ENCODE measurements at regions of chr14 and their contacts with region 1.

Region 1: GRCh38 chr14:32252030-32252670 is 49.1 kb upstream of the RNU6-8 start:
- DNase-seq: no peak
- ATAC-seq: peak; percentile 85
- H3K4me3 ChIP-seq: no peak overlapping the region
- H3K27ac ChIP-seq: no peak overlapping the region
- H3K4me1 ChIP-seq: no peaks in the 10 kb centered on the region
- H3K27me3 ChIP-seq: no peaks in the 10 kb centered on the region

Region 2: GRCh38 chr14:31926123-31926522 is 326.0 kb before region 1 on chr14:
- intact Hi-C with region 1: loop called (anchors 2 to 5 kb)
- DNase-seq: no peak
- ATAC-seq: no peak
- H3K4me3 ChIP-seq: no peak overlapping the region
- H3K27ac ChIP-seq: no peak overlapping the region
- H3K4me1 ChIP-seq: peaks cover 0 to 2% of the 10 kb centered on the region in 2 donors
- H3K27me3 ChIP-seq: no peaks in the 10 kb centered on the region

Region 3: DNA sequence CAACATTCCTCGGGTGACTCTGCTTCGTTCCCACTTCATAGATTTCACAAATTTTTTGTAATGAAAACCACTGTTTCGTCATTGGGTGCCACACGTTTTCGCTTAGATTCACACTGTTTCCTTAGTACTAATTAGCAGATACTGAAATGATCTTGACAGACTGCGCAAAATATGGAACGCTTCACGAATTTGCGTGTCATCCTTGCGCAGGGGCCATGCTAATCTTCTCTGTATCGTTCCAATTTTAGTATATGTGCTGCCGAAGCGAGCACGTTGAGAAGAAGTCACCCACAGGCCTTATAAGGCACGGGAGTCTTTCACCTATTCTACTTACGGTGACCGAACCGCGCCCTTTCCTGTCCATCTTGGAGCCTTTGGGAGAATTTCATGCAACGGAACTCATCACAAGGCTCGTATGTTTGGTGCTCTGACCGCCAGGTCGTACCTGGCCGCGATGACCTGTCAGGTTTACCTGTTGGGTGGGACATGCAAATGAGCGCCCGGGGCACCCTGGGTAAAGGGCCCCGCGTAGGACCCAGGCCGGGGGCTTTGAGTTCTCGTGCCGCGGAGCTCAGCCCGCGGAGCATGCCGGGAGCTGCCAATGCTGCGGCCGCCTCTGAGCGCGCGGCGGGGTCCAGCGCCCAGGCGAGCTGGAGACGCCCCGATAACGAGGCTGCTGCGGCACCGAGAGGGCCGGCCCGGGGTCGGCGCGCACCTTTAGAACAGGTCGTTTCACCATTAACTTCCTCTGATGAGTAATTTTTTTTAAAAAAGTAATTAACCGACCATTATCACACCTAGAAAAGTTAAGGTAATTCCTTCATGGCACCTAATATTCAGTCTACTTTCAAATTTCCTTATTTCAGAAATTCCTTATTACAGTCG is 48.9 kb before region 1 on chr14 and contains the start of gene RNU6-8:
- intact Hi-C with region 1: loop called in 1 of 2 experiments (anchors 5 kb)
- DNase-seq: peak; percentile 89 to 93
- ATAC-seq: peak; percentile 96
- H3K4me3 ChIP-seq: peak within 1 kb of the TSS; percentile 62 to 88
- H3K27ac ChIP-seq: peak within 1 kb of the TSS; percentile 19 to 61
- H3K4me1 ChIP-seq: peaks cover 0 to 2% of the 10 kb centered on the region in 2 donors
- H3K27me3 ChIP-seq: no peaks in the 10 kb centered on the region
- total RNA-seq, gene RNU6-8: not detected

Region 4: GRCh38 chr14:32509632-32510187 is 257.6 kb after region 1 on chr14:
- intact Hi-C with region 1: loop called in 1 of 2 experiments (anchors 5 kb)
- DNase-seq: peak; percentile 81 to 90
- ATAC-seq: peak; percentile 78
- H3K4me3 ChIP-seq: peak overlapping the region in 1 of 2 donors; percentile 11
- H3K27ac ChIP-seq: peak overlapping the region; percentile 1 to 98
- H3K4me1 ChIP-seq: peaks cover 0 to 6% of the 10 kb centered on the region in 2 donors
- H3K27me3 ChIP-seq: no peaks in the 10 kb centered on the region